CD4-positive, alpha-beta memory T cell (primary cell): ENCODE measurements at regions of chr4 and their contacts with region 1.

Region 1: DNA sequence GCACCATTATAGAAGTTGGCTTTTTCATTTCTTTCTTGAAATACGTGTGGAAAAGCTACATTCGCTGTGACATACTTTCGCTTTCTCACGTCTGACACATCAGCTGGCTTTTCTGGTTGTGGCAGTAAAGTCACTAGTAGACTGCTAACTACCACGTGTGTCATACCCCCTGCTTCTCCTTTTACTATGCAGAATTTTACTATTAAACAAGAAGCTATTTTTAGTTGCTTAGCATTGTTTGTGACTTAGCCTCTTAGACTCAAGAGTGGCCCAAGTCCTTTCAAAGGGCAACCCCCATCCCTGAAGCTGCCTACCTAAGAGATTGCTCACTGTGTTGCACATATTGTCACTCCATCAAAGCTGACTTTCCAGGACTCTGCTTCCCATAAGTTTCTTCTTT is 2.1 kb upstream of the IL2 start:
- DNase-seq: peak; percentile 45 to 70 (median 53)
- H3K4me3 ChIP-seq: peak overlapping the region; percentile 26 to 75
- H3K4me3 Mint-ChIP-seq: peak overlapping the region; percentile 84 to 90 (median 88)
- H3K27ac ChIP-seq: peak overlapping the region; percentile 42
- H3K27ac Mint-ChIP-seq: peak overlapping the region; percentile 81 to 95 (median 93)
- H3K4me1 ChIP-seq: peaks cover 55% of the 10 kb centered on the region
- H3K4me1 Mint-ChIP-seq: peaks cover 40 to 52% (median 46%) of the 10 kb centered on the region in 4 donors
- H3K27me3 ChIP-seq: no peaks in the 10 kb centered on the region
- H3K27me3 Mint-ChIP-seq: no peaks in the 10 kb centered on the region

Region 2: DNA sequence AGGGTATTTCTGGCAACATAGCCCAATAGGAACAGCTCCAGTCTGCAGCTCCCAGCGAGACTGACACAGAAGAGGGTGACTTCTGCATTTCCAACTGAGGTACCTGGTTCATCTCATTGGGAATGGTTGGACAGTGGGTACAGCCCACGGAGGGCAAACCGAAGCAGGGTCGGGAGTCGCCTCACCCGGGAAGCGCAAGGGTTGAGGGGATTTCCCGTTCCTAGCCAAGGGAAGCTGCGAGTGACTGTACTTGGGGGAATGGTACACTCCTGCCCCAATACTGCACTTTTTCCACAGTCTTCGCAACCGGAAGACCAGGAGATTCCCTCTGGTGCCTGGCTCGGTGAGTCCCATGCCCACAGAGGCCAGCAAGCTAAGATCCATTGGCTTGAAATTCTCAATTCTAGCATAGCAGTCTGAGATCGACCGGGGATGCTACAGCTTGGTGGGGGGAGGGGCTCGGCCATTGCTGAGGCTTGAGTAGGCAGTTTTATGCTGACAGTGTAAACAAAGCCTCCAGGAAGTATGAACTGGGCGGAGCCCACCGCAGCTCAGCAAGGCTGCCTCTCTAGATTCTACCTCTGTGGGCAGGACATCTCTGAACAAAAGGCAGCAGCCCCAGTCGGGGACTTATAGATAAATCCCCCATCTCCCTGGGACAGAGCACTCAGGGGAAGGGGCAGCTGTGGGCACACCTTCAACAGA is 93.8 kb before region 1 on chr4:
- CTCF ChIA-PET with region 1: interaction called, 4 read pairs
- POLR2A ChIA-PET with region 1: interaction called, 3 read pairs
- intact Hi-C with region 1: loop called (anchors 5 kb)
- DNase-seq: peak; percentile 3 to 37 (median 35)
- H3K4me3 ChIP-seq: no peak overlapping the region
- H3K4me3 Mint-ChIP-seq: peak overlapping the region in 6 of 8 donors; percentile 7 to 52 (median 17)
- H3K27ac ChIP-seq: no peak overlapping the region
- H3K27ac Mint-ChIP-seq: peak overlapping the region in 1 of 7 donors; percentile 53
- H3K4me1 ChIP-seq: peaks cover 13% of the 10 kb centered on the region
- H3K4me1 Mint-ChIP-seq: peaks cover 5 to 22% (median 9%) of the 10 kb centered on the region in 4 donors
- H3K27me3 ChIP-seq: no peaks in the 10 kb centered on the region
- H3K27me3 Mint-ChIP-seq: no peaks in the 10 kb centered on the region

Region 3: DNA sequence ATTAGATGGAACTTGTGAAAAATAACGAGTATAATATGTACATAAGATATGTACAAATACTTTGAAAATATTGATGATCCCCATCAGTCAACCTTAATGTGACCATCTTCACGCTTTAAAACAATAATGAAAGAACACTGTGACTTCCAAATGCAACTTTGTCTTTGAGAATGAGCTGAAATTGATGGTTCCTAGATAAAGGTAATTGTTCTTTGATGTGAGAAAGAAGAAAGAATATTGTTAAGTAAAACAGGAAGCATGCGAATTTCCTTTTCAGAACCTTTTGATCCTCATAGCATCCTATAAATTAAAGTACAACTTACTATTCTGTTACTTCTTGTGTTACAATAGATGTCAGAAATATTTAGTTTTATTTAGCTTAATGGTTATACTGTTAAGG is 24.3 kb before region 1 on chr4:
- CTCF ChIA-PET with region 1: no interaction called
- POLR2A ChIA-PET with region 1: no interaction called
- intact Hi-C with region 1: loop called (anchors 2 kb)
- DNase-seq: peak in 4 of 5 donors; percentile 39 to 49 (median 47)
- H3K4me3 ChIP-seq: no peak overlapping the region
- H3K4me3 Mint-ChIP-seq: peak overlapping the region in 7 of 8 donors; percentile 15 to 63 (median 53)
- H3K27ac ChIP-seq: no peak overlapping the region
- H3K27ac Mint-ChIP-seq: peak overlapping the region in 5 of 7 donors; percentile 14 to 60 (median 37)
- H3K4me1 ChIP-seq: peaks cover 24% of the 10 kb centered on the region
- H3K4me1 Mint-ChIP-seq: peaks cover 26 to 37% (median 30%) of the 10 kb centered on the region in 4 donors
- H3K27me3 ChIP-seq: no peaks in the 10 kb centered on the region
- H3K27me3 Mint-ChIP-seq: no peaks in the 10 kb centered on the region

Region 4: DNA sequence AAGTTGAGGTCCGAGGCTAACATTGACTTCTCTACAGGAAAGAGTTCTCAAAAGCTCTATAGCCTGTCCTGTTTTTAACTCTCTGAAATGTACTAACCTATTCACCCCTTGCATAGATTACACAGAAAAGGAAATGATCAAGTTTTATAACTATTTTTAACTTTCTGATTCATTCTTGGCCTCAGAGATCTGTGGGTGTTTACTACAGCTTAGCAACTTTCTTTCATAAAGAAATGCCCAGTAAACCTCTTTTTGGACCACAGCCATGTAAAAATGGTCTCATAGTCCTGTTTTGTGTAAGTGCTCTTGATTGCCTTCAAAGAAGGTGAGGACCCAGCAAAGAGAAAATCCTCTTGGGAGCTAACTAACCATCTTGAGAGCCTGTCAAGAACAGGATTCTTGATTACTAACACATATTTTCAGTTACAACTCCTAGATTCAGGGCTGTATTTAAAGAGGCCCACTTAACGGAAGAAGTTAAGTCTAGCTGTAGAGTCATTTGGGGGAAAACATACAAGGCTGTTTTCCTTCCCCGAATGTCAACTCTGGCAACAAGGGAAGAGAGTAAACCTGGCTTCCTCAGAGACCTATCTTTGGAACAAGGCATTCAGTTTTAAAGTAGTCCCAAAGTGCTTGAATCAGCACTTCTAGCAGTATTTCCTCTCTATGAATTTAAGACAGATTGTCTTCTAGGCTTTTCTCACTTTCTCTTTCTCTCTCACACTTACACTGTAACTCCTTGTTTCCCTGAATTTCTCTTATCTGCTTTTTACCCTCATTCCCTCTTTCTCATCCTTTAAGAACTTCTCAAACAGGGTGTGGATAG is 84.0 kb after region 1 on chr4:
- CTCF ChIA-PET with region 1: interaction called, 10 read pairs
- POLR2A ChIA-PET with region 1: interaction called, 4 read pairs
- intact Hi-C with region 1: loop called (anchors 2 kb)
- DNase-seq: peak in 1 of 5 donors; percentile 8
- H3K4me3 ChIP-seq: no peak overlapping the region
- H3K4me3 Mint-ChIP-seq: peak overlapping the region in 6 of 8 donors; percentile 51 to 87 (median 68)
- H3K27ac ChIP-seq: no peak overlapping the region
- H3K27ac Mint-ChIP-seq: peak overlapping the region; percentile 33 to 93 (median 80)
- H3K4me1 ChIP-seq: peaks cover 43% of the 10 kb centered on the region
- H3K4me1 Mint-ChIP-seq: peaks cover 31 to 55% (median 44%) of the 10 kb centered on the region in 4 donors
- H3K27me3 ChIP-seq: no peaks in the 10 kb centered on the region
- H3K27me3 Mint-ChIP-seq: no peaks in the 10 kb centered on the region

Region 5: GRCh38 chr4:122588453-122589238 is 130.0 kb after region 1 on chr4:
- CTCF ChIA-PET with region 1: no interaction called
- POLR2A ChIA-PET with region 1: no interaction called
- intact Hi-C with region 1: no loop called
- DNase-seq: no peak
- H3K4me3 ChIP-seq: no peak overlapping the region
- H3K4me3 Mint-ChIP-seq: no peak overlapping the region
- H3K27ac ChIP-seq: no peak overlapping the region
- H3K27ac Mint-ChIP-seq: no peak overlapping the region
- H3K4me1 ChIP-seq: peaks cover 18% of the 10 kb centered on the region
- H3K4me1 Mint-ChIP-seq: peaks cover 10 to 23% (median 14%) of the 10 kb centered on the region in 4 donors
- H3K27me3 ChIP-seq: no peaks in the 10 kb centered on the region
- H3K27me3 Mint-ChIP-seq: no peaks in the 10 kb centered on the region